ENCODE measurements at regions of chr1 and their contacts with region 1.

Region 1: DNA sequence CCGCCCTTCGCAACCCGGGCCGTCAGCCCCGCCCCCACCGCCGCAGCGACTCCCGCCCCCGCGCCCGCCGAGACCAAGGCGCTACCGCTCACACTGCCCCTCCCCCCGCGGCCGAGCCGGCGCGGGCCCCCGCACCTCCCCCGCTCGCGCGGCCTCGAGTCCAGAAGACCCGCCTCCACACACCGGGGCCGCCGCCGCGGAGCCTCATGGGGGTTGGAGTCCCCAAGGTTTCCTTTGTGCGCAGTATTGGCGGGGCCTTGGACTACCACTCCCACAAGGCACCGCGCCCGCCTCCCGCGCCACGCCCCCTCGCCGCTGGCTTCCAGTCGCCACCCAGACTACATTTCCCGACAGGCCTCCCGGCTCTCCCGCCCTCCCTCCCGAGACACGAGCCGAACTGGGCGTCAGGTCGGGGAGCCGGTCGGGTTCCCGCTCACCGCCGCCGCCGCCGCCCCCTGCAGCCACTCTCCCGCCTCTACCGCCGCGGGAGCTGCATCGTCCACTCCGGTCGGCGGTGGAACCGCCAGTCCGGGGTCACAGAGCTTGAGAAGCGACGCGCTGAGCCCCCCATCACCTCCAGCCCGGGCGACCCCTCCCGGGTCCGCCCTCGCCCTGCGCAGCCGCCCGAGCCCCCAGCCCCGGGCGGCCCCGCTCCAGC is at the start of gene PHF13:
- DNase-seq: peak; percentile 99
- H3K4me3 Mint-ChIP-seq: peak within 1 kb of the TSS; percentile 85
- H3K27ac Mint-ChIP-seq: peak within 1 kb of the TSS; percentile 82
- H3K4me1 Mint-ChIP-seq: peaks cover 24% of the 10 kb centered on the region
- H3K27me3 Mint-ChIP-seq: peaks cover 4% of the 10 kb centered on the region
- total RNA-seq, gene PHF13: 18.8 and 19.5 TPM in 2 replicates

Region 2: DNA sequence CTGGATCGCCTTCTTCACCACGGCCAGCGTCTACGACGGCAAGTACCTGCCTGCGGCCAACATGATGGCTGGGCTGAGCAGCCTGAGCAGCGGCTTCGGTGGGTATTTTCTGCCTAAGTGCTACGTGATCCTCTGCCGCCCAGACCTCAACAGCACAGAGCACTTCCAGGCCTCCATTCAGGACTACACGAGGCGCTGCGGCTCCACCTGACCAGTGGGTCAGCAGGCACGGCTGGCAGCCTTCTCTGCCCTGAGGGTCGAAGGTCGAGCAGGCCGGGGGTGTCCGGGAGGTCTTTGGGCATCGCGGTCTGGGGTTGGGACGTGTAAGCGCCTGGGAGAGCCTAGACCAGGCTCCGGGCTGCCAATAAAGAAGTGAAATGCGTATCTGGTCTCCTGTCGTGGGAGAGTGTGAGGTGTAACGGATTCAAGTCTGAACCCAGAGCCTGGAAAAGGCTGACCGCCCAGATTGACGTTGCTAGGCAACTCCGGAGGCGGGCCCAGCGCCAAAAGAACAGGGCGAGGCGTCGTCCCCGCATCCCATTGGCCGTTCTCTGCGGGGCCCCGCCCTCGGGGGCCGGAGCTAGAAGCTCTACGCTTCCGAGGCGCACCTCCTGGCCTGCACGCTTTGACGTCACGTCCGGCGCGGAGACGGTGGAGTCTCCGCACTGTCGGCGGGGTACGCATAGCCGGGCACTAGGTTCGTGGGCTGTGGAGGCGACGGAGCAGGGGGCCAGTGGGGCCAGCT is 33.9 kb before region 1 on chr1 and contains the start of gene ZBTB48:
- intact Hi-C with region 1: loop called (anchors 1 kb)
- DNase-seq: peak; percentile 97
- H3K4me3 Mint-ChIP-seq: peak within 1 kb of the TSS; percentile 95
- H3K27ac Mint-ChIP-seq: peak within 1 kb of the TSS; percentile 98
- H3K4me1 Mint-ChIP-seq: peaks cover 36% of the 10 kb centered on the region
- H3K27me3 Mint-ChIP-seq: no peaks in the 10 kb centered on the region
- total RNA-seq, gene ZBTB48: 34.5 and 35.7 TPM in 2 replicates

Region 3: GRCh38 chr1:6701437-6702153 is 88.1 kb after region 1 on chr1 and contains the start of gene DNAJC11:
- intact Hi-C with region 1: loop called (anchors 1 kb)
- DNase-seq: peak; percentile 92
- H3K4me3 Mint-ChIP-seq: peak within 1 kb of the TSS; percentile 92
- H3K27ac Mint-ChIP-seq: peak within 1 kb of the TSS; percentile 96
- H3K4me1 Mint-ChIP-seq: peaks cover 27% of the 10 kb centered on the region
- H3K27me3 Mint-ChIP-seq: no peaks in the 10 kb centered on the region
- total RNA-seq, gene DNAJC11: 81.4 and 84.4 TPM in 2 replicates